Activated B cell treated with CpG ODN at 0.5 μM for 24 hours (primary cell): ENCODE measurements at regions of chr11 and their contacts with region 1.

Region 1: GRCh38 chr11:118145285-118146227 is 7.1 kb downstream of the SCN4B start:
- DNase-seq: peak; percentile 74
- ATAC-seq: peak; percentile 99
- H3K4me3 Mint-ChIP-seq: peak overlapping the region; percentile 82
- H3K27ac Mint-ChIP-seq: no peak overlapping the region
- H3K4me1 Mint-ChIP-seq: peaks cover 5% of the 10 kb centered on the region
- H3K27me3 Mint-ChIP-seq: peaks cover 68% of the 10 kb centered on the region
- CTCF ChIP-seq: no peak

Region 2: DNA sequence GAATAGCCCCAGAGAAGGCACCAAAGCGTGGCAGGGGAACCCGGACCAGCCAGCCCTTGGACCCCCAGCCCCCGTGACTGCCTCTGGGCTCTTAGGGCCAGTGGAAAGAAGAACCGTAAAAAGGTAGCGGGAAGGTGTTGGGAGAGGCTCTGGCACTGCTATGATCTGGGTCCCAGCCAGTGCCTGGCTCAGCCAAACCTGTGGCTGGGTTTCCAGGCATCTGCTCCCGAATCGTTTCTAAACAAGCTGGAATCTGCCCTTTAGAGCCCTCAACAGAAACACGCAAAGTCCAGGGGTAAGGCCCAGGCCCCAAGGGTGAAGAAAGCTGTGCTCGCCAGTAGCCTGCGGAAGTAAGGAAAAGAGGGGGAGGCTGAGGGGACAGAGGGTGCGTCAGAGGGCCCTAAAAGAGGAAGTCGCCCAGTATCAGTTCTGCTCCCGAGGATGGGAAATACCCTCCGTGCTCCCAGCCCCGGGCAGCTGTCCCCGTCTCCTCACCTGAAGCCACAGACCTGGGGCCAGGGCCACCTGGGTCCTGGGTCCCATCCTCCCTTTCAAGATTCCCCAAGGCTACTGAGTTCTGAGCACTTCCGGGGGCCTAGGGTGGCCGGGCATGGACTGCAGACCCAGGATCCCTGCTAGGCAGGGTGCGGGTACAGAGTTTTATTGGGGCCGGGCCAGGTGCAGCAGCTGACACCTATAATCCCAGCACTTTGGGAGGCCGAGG is 134.7 kb before region 1 on chr11:
- CTCF ChIA-PET with region 1: no interaction called
- POLR2A ChIA-PET with region 1: no interaction called
- intact Hi-C with region 1: no loop called
- DNase-seq: peak; percentile 77
- ATAC-seq: peak; percentile 67
- H3K4me3 Mint-ChIP-seq: peak overlapping the region; percentile 66
- H3K27ac Mint-ChIP-seq: peak overlapping the region; percentile 98
- H3K4me1 Mint-ChIP-seq: peaks cover 100% of the 10 kb centered on the region
- H3K27me3 Mint-ChIP-seq: no peaks in the 10 kb centered on the region
- CTCF ChIP-seq: no peak

Region 3: GRCh38 chr11:118171269-118172062 is 25.9 kb after region 1 on chr11:
- CTCF ChIA-PET with region 1: interaction called, 46 read pairs
- POLR2A ChIA-PET with region 1: no interaction called
- intact Hi-C with region 1: loop called (anchors 1 kb)
- DNase-seq: peak; percentile 58
- ATAC-seq: peak; percentile 86
- H3K4me3 Mint-ChIP-seq: no peak overlapping the region
- H3K27ac Mint-ChIP-seq: no peak overlapping the region
- H3K4me1 Mint-ChIP-seq: no peaks in the 10 kb centered on the region
- H3K27me3 Mint-ChIP-seq: peaks cover 34% of the 10 kb centered on the region
- CTCF ChIP-seq: peak; percentile 81

Region 4: GRCh38 chr11:118290923-118291322 is 145.4 kb after region 1 on chr11:
- CTCF ChIA-PET with region 1: no interaction called
- POLR2A ChIA-PET with region 1: no interaction called
- intact Hi-C with region 1: loop called (anchors 1 kb)
- DNase-seq: no peak
- ATAC-seq: peak; percentile 37
- H3K4me3 Mint-ChIP-seq: no peak overlapping the region
- H3K27ac Mint-ChIP-seq: no peak overlapping the region
- H3K4me1 Mint-ChIP-seq: no peaks in the 10 kb centered on the region
- H3K27me3 Mint-ChIP-seq: peaks cover 15% of the 10 kb centered on the region
- CTCF ChIP-seq: no peak

Region 5: GRCh38 chr11:118488480-118489109 is 343.0 kb after region 1 on chr11:
- CTCF ChIA-PET with region 1: interaction called, 4 read pairs
- POLR2A ChIA-PET with region 1: no interaction called
- intact Hi-C with region 1: loop called (anchors 1 kb)
- DNase-seq: peak; percentile 46
- ATAC-seq: peak; percentile 72
- H3K4me3 Mint-ChIP-seq: no peak overlapping the region
- H3K27ac Mint-ChIP-seq: no peak overlapping the region
- H3K4me1 Mint-ChIP-seq: no peaks in the 10 kb centered on the region
- H3K27me3 Mint-ChIP-seq: no peaks in the 10 kb centered on the region
- CTCF ChIP-seq: peak; percentile 41

Region 6: GRCh38 chr11:118610804-118611795 is 465.5 kb after region 1 on chr11:
- CTCF ChIA-PET with region 1: interaction called, 4 read pairs
- POLR2A ChIA-PET with region 1: no interaction called
- intact Hi-C with region 1: loop called (anchors 1 kb)
- DNase-seq: peak; percentile 83
- ATAC-seq: peak; percentile 59
- H3K4me3 Mint-ChIP-seq: peak overlapping the region; percentile 79
- H3K27ac Mint-ChIP-seq: no peak overlapping the region
- H3K4me1 Mint-ChIP-seq: peaks cover 26% of the 10 kb centered on the region
- H3K27me3 Mint-ChIP-seq: peaks cover 35% of the 10 kb centered on the region
- CTCF ChIP-seq: peak; percentile 46

Region 7: DNA sequence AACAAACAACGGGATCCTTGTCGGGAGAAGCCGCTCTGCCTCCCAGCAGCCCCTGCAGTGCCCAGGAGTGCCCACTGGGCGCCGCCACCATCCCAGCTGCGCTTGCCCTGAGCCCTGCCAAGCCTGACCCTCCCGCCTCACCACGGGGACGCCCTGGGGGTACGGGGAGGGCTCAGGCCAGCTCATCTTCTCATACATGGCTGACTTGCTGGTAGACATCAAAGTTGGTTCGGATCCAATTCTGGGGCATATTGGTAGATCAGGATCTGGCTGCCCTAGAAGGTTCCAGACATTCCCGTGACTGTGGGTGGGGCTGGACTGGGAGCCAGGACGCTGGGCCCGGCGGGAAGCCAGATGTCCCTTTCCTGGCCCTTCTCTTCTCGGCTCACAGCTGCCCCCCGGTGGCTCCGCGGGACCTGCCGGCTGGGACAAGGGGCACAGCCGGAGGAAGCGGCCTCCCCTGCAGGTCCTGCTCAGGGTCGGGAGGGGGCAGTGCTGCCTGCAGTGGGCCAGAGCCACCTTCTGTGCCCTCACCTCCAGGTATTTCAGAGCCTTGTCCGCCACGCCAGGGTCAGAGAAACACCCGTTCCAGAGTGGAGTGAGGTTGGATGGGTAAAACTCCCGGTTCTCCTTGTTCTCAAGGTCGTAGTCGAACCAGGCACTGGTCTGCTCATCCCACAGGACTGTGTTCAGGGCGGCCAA is 544.4 kb after region 1 on chr11:
- CTCF ChIA-PET with region 1: no interaction called
- POLR2A ChIA-PET with region 1: no interaction called
- intact Hi-C with region 1: loop called (anchors 1 kb)
- DNase-seq: peak; percentile 74
- ATAC-seq: peak; percentile 95
- H3K4me3 Mint-ChIP-seq: peak overlapping the region; percentile 79
- H3K27ac Mint-ChIP-seq: peak overlapping the region; percentile 15
- H3K4me1 Mint-ChIP-seq: peaks cover 12% of the 10 kb centered on the region
- H3K27me3 Mint-ChIP-seq: peaks cover 4% of the 10 kb centered on the region
- CTCF ChIP-seq: peak; percentile 55